CD8-positive, alpha-beta memory T cell (primary cell): ENCODE measurements at regions of chr19 and their contacts with region 1.

Region 1: DNA sequence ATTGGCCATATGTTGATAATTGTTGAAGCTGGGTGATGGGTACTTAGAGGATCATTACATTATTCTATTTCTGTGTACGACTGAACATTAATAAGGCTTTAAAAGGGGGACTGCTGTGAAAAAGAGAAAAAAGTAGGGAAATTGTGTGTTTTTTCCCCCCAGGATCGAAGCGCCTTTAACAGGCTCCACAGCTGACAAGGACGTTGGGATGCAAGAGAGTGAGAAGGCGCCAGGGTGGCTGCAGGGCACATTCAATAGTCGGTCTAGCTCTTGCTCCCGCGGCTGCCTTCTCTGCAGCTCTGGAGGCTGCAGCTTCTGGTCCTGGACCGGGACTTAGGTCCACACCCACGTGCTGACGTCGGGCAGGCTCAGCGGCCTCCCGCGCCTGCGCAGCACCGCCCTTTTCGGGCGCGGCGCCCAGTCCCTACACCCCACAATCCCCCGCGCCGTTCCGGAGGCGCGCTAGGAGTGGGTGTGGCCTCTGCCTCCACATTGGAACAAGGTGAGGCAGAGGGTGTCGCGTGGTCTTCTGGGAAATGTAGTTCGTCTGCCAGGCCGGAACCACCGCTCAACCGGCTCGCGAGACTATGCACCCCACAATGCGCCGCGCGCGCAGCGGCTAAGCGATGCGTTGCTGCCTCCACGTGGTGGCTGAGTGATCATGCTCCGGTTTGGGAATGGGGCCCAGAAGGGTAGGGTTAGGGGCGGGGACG is 4.9 kb upstream of the LRFN3 start:
- DNase-seq: peak; percentile 98 to 100 (median 100)
- H3K4me3 ChIP-seq: peak overlapping the region; percentile 47
- H3K4me3 Mint-ChIP-seq: peak overlapping the region; percentile 63 to 88 (median 72)
- H3K27ac ChIP-seq: peak overlapping the region; percentile 44
- H3K27ac Mint-ChIP-seq: peak overlapping the region; percentile 76 to 98 (median 88)
- H3K4me1 ChIP-seq: peaks cover 54% of the 10 kb centered on the region
- H3K4me1 Mint-ChIP-seq: peaks cover 33 to 53% (median 53%) of the 10 kb centered on the region in 3 donors
- H3K27me3 ChIP-seq: no peaks in the 10 kb centered on the region
- H3K27me3 Mint-ChIP-seq: peaks cover 0 to 1% of the 10 kb centered on the region in 2 donors

Region 2: GRCh38 chr19:35879770-35880317 is 51.5 kb before region 1 on chr19:
- CTCF ChIA-PET with region 1: interaction called, 104 read pairs
- POLR2A ChIA-PET with region 1: interaction called, 8 read pairs
- DNase-seq: peak; percentile 62 to 82 (median 70)
- H3K4me3 ChIP-seq: no peak overlapping the region
- H3K4me3 Mint-ChIP-seq: peak overlapping the region in 2 of 7 donors; percentile 23 to 57
- H3K27ac ChIP-seq: no peak overlapping the region
- H3K27ac Mint-ChIP-seq: no peak overlapping the region
- H3K4me1 ChIP-seq: peaks cover 13% of the 10 kb centered on the region
- H3K4me1 Mint-ChIP-seq: peaks cover 11 to 13% (median 11%) of the 10 kb centered on the region in 3 donors
- H3K27me3 ChIP-seq: peaks cover 12% of the 10 kb centered on the region
- H3K27me3 Mint-ChIP-seq: peaks cover 15 to 43% of the 10 kb centered on the region in 2 donors

Region 3: DNA sequence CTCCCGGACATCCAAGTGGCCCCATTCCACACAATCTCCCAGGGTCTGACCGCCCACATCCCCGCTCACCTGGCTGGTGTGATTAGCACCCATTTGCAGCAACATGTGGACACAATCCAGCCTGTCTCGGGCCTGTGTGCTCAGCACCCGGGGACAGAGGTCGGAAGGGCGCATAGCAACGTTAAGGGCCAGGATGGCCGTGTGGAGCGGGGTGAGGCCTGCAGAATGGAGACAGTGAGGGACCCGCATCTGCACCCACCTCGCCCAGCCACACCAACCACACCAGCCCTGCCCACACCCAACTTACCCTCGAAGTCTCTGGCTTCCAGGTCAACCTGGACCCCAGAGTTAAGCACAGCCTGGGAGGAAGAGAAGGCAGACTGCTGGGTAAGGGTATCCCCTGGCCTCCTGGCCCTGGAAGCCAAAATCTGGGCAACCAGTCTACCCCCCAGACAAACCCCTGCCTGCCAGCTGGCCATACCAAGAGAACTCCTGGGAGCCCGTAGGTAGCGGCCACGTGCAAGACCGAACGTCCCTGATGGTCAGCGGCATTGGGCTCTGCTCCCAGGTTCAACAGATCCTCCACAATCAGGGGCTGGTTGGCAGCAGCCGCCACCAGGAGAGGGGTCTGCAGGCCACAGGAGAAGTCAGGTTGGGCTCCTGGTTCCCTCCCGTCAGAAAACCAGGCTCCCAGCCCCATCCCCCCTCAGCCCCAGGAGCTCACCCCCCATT is 35.2 kb before region 1 on chr19:
- CTCF ChIA-PET with region 1: interaction called, 11 read pairs
- POLR2A ChIA-PET with region 1: interaction called, 7 read pairs
- DNase-seq: no peak
- H3K4me3 ChIP-seq: no peak overlapping the region
- H3K4me3 Mint-ChIP-seq: peak overlapping the region in 6 of 7 donors; percentile 16 to 78 (median 39)
- H3K27ac ChIP-seq: no peak overlapping the region
- H3K27ac Mint-ChIP-seq: peak overlapping the region in 6 of 8 donors; percentile 54 to 72 (median 63)
- H3K4me1 ChIP-seq: peaks cover 29% of the 10 kb centered on the region
- H3K4me1 Mint-ChIP-seq: peaks cover 28 to 43% (median 30%) of the 10 kb centered on the region in 3 donors
- H3K27me3 ChIP-seq: no peaks in the 10 kb centered on the region
- H3K27me3 Mint-ChIP-seq: no peaks in the 10 kb centered on the region

Region 4: DNA sequence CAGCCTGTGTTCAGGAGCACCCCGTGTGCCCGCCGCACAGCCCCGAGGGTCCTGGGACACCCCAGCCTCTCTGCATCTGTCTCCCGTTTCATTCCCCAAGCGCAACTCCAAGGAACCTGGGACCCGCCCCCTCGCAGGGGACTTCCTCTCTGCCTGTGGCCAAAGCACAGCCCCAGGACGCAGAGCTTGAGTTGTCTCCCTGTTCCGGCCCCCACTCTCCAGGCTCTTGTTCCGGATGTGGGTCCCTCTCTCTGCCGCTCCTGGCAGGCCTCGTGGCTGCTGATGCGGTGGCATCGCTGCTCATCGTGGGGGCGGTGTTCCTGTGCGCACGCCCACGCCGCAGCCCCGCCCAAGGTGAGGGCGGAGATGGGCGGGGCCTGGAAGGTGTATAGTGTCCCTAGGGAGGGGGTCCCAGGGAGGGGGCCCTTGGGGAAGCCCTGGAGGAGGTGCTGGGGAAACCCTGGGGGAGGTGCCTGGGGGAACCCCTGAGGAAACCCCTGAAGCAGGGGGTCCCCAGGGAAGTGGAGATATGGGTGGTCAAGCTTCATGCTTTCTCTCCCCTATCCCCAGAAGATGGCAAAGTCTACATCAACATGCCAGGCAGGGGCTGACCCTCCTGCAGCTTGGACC is 27.7 kb before region 1 on chr19:
- CTCF ChIA-PET with region 1: interaction called, 16 read pairs
- POLR2A ChIA-PET with region 1: interaction called, 16 read pairs
- DNase-seq: peak; percentile 84 to 94 (median 89)
- H3K4me3 ChIP-seq: peak overlapping the region; percentile 100
- H3K4me3 Mint-ChIP-seq: peak overlapping the region; percentile 87 to 100 (median 95)
- H3K27ac ChIP-seq: peak overlapping the region; percentile 90
- H3K27ac Mint-ChIP-seq: peak overlapping the region; percentile 87 to 99 (median 98)
- H3K4me1 ChIP-seq: peaks cover 50% of the 10 kb centered on the region
- H3K4me1 Mint-ChIP-seq: peaks cover 45 to 58% (median 51%) of the 10 kb centered on the region in 3 donors
- H3K27me3 ChIP-seq: no peaks in the 10 kb centered on the region
- H3K27me3 Mint-ChIP-seq: no peaks in the 10 kb centered on the region

Region 5: DNA sequence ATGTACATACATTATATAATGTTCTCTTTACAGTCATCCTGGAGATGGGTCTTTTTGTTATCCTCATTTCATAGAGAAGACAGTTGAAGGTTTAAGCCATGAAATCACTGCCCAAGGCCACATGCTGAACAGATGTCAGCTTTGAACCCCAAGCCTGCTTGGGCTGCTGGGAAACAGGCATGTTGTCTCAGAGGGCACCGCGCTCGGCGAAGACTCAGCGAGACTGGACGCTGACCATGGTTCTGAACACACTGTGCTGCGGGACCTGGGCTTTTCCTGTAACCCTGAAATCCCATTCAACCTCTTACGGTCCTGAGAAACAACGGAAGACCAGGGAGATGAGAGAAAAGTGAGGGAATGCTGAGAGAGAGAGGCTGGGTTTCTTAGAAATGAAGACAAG is 32.2 kb after region 1 on chr19:
- CTCF ChIA-PET with region 1: interaction called, 13 read pairs
- POLR2A ChIA-PET with region 1: interaction called, 3 read pairs
- DNase-seq: no peak
- H3K4me3 ChIP-seq: no peak overlapping the region
- H3K4me3 Mint-ChIP-seq: no peak overlapping the region
- H3K27ac ChIP-seq: no peak overlapping the region
- H3K27ac Mint-ChIP-seq: no peak overlapping the region
- H3K4me1 ChIP-seq: peaks cover 15% of the 10 kb centered on the region
- H3K4me1 Mint-ChIP-seq: peaks cover 20 to 33% (median 21%) of the 10 kb centered on the region in 3 donors
- H3K27me3 ChIP-seq: no peaks in the 10 kb centered on the region
- H3K27me3 Mint-ChIP-seq: peaks cover 4% of the 10 kb centered on the region in 2 donors